AG04450 (cell line): ENCODE measurements at regions of chr6 and their contacts with region 1.

Region 1: DNA sequence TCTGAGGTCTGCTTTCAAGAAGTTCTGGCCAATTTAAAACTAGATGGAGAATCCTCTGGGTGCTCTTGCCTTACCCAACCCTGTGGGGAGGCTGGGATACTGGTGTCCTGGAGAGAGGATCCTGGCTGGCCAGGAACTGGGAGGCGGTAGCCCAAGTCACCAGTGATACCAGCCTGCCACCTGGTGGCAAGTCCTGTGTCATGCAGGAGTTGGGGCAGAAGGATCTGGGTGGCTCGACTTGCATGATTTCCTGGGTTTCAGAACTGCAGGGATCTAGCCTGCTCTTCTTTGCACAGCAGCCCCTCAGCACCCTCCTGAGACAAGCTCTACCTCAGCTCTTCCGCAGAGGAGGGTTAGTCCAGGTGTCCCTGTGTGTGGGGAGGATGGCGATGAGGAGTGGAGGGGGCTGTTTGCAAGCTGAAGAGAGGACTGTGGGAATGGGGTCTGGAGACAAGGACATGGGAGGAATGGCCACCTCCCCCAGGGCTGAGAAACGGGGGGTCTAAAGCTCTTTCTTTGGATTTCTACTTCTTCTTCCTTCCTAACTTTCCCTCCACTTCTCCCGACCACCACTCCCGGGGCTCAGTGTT is 4.2 kb downstream of the KCNK17 start:
- DNase-seq: peak; percentile 20
- H3K4me3 ChIP-seq: no peak overlapping the region
- H3K27ac ChIP-seq: no peak overlapping the region
- H3K27me3 ChIP-seq: peaks cover 30% of the 10 kb centered on the region
- CTCF ChIP-seq: peak; percentile 87

Region 2: DNA sequence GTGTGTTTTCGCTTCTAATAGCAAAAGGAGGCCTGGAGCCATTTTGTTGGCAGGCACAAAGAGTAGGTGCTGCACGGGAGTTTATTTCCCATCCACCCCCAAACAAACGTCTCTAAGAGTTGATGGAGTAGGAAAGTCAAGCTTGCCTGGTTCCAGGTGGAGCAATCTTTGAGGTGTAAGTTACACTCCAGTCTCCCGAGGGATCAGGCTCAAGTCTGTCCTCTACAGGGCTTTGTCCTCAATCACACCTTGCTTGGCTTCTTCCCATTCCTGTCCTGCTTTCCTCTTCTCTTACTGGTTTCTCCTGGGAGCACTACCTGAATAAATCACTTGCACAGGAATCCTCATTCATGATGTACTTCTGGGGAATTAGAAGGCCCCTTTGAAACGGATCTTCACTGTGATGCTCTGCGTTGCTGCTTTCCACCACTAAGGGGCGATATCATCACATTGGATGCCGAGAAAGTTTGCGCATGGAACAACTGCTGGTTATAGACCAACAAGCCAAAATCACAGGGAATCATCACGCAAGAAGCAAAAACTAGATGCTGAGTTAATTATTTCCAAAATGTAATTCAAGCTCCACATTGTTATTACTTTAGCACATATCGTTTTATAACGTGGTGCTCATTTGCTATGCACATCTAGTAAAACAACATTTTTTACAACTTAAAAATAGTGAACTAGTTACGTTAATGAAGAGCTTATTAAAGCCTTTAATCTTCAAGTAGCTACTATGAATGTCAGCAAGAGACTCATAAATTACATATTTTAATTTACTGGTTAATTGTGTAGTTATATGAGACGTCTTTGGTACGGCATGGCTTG is 438.1 kb before region 1 on chr6:
- CTCF ChIA-PET with region 1: interaction called, 47 read pairs
- POLR2A ChIA-PET with region 1: no interaction called
- DNase-seq: peak; percentile 1
- H3K4me3 ChIP-seq: no peak overlapping the region
- H3K27ac ChIP-seq: no peak overlapping the region
- H3K27me3 ChIP-seq: no peaks in the 10 kb centered on the region
- CTCF ChIP-seq: peak; percentile 96

Region 3: DNA sequence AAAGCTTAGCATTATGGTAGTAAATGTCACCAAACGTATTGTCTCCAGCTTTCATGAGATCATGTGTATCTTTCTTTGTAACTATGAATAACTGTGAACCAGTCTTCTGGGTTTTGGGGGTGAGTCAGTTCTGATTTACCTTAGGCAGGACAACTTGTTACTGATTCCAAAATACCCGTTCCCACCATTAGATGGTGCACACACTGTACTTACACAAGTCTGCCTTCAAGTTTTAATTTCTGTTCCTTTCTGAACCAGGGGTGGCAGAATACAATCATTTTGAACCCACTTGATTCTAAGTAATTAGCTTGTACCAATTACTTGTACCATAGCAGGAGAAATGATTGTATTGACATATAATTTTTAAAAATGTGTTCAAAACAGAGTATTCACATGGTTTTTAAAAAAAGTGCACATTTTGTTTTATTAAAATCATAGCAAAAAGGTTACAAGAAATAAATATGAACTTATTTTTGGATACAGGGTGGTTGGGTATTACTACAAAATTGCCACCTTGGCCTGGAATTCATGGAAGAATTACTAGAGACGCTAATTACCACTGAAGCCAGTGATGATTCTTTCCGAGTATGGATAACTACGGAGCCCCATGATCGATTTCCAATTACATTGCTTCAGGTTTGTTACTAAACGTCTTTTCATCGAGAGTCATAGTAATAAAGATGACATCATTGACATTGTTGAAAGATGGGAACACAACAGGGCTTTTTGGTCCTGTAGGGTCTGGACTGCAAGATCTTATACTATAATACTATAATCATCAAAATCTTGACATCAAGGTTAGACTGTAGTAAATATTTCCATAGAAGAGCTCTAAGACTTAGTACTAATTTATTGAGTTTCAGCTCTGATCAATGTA is 336.6 kb before region 1 on chr6:
- CTCF ChIA-PET with region 1: interaction called, 13 read pairs
- POLR2A ChIA-PET with region 1: no interaction called
- DNase-seq: peak; percentile 38
- H3K4me3 ChIP-seq: no peak overlapping the region
- H3K27ac ChIP-seq: no peak overlapping the region
- H3K27me3 ChIP-seq: no peaks in the 10 kb centered on the region
- CTCF ChIP-seq: peak; percentile 72

Region 4: DNA sequence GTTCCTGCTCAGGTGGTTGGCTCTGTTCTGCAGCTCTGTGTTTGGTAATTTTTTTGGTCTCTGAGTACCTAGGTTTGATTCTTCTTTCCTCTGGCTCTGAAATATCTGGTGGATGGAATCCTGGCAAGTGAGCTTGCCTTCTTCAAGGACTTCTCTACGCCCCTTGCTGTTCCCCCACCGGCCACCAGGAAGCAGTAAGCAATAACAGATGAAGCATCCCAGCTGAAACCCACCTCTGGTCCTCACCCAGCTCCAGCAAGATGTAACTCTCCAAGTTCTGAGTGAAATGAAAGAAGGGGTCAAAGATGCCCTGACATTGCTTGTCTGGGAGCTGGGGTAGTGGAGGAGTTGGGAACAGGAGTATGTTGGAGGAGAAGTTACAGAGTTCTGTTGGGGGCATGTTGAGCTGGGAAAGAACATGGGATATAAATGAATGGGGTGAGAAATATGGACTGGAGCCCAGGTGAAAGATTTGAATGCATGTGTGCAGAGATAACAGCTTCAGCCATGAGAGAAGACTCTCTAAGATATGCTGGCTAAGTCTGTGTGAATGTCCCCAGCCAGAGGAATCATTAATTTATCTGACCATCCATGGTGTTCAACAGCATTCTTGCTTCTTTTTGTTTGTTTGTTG is 312.8 kb before region 1 on chr6:
- CTCF ChIA-PET with region 1: interaction called, 21 read pairs
- POLR2A ChIA-PET with region 1: no interaction called
- DNase-seq: no peak
- H3K4me3 ChIP-seq: no peak overlapping the region
- H3K27ac ChIP-seq: no peak overlapping the region
- H3K27me3 ChIP-seq: no peaks in the 10 kb centered on the region
- CTCF ChIP-seq: peak; percentile 63

Region 5: GRCh38 chr6:39088331-39088730 is 221.7 kb before region 1 on chr6:
- CTCF ChIA-PET with region 1: interaction called, 31 read pairs
- POLR2A ChIA-PET with region 1: no interaction called
- DNase-seq: peak; percentile 55
- H3K4me3 ChIP-seq: no peak overlapping the region
- H3K27ac ChIP-seq: no peak overlapping the region
- H3K27me3 ChIP-seq: no peaks in the 10 kb centered on the region
- CTCF ChIP-seq: peak; percentile 72

Region 6: GRCh38 chr6:39166189-39166911 is 143.7 kb before region 1 on chr6:
- CTCF ChIA-PET with region 1: interaction called, 10 read pairs
- POLR2A ChIA-PET with region 1: no interaction called
- DNase-seq: peak; percentile 4
- H3K4me3 ChIP-seq: no peak overlapping the region
- H3K27ac ChIP-seq: no peak overlapping the region
- H3K27me3 ChIP-seq: no peaks in the 10 kb centered on the region
- CTCF ChIP-seq: peak; percentile 67

Region 7: DNA sequence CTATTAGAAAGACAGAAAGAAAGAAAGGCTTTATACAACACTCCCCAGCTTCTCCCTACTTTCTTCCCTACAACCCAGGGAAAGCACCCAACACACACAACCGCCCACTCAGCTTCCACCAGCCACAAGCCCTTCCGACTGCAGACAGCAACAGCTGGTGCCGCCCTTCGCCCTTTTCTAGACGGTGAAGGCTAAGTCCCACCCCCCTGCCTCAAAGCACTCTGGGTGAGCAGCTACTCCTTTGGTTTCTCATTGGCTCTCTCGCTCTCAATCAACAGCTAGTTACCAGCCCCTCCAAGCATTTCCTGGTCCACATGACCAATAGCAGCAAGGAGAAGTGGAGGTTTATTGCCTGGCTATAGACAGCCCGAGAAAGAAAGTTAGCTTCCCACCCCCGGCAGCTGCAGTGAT is 854.3 kb after region 1 on chr6:
- CTCF ChIA-PET with region 1: no interaction called
- POLR2A ChIA-PET with region 1: no interaction called
- DNase-seq: no peak
- H3K4me3 ChIP-seq: no peak overlapping the region
- H3K27ac ChIP-seq: no peak overlapping the region
- H3K27me3 ChIP-seq: no peaks in the 10 kb centered on the region
- CTCF ChIP-seq: no peak